ENCODE measurements at regions of chr6 and their contacts with region 1.

Region 1: DNA sequence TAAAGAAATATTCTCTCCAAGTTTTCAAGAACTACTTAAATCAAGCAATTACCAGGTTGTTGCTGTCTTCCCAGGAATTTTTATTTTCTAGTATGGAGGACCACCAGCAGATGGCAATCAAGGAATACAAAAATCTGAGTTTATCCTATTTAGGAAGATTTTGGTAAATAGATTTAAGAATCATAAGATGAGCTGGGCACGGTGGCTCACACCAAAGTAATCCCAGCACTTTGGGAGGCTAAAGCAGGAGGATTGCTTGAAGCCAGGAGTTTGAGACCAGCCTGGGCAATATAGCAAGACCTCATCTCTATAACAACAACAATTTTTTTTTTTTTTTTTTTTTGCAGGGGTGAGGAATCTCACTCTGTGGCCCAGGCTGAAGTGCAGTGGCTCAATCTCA is 19.3 kb upstream of the SEC63 start:
- DNase-seq: no peak
- ATAC-seq: no peak
- H3K4me3 ChIP-seq: no peak overlapping the region
- H3K27ac ChIP-seq: no peak overlapping the region
- H3K4me1 ChIP-seq: peaks cover 30% of the 10 kb centered on the region
- H3K27me3 ChIP-seq: no peaks in the 10 kb centered on the region
- CTCF ChIP-seq: peak; percentile 57
- EP300 ChIP-seq: no peak
- POLR2A ChIP-seq: no peak
- RAD21 ChIP-seq: 0 out of 2 replicates have a peak, but pooled peaks have one; percentile 24

Region 2: DNA sequence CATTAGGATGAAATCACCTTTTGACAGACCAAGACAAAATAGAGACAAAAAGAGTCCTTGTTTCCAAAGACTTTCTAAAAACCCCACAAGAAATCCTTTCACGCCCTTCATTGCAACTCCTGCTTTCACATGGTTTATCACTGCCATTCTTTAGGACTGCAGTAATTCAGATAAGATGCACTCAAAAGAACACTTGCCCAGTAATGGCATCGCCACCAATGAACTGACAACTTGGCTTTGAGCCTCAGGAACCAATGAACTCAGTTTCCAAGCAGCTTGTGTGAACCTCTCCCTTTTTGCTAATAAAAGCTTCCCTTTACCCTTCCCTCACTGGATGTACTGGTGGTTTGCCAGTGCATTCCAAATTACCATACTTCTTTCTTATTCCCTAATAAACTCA is 75.4 kb after region 1 on chr6:
- CTCF ChIA-PET with region 1: interaction called, 85 read pairs
- POLR2A ChIA-PET with region 1: no interaction called
- in situ Hi-C with region 1: loop called (anchors 5 kb)
- intact Hi-C with region 1: loop called (anchors 1 kb)
- DNase-seq: no peak
- ATAC-seq: no peak
- H3K4me3 ChIP-seq: no peak overlapping the region
- H3K27ac ChIP-seq: no peak overlapping the region
- H3K4me1 ChIP-seq: no peaks in the 10 kb centered on the region
- H3K27me3 ChIP-seq: no peaks in the 10 kb centered on the region
- CTCF ChIP-seq: no peak
- EP300 ChIP-seq: no peak
- POLR2A ChIP-seq: no peak
- RAD21 ChIP-seq: no peak

Region 3: DNA sequence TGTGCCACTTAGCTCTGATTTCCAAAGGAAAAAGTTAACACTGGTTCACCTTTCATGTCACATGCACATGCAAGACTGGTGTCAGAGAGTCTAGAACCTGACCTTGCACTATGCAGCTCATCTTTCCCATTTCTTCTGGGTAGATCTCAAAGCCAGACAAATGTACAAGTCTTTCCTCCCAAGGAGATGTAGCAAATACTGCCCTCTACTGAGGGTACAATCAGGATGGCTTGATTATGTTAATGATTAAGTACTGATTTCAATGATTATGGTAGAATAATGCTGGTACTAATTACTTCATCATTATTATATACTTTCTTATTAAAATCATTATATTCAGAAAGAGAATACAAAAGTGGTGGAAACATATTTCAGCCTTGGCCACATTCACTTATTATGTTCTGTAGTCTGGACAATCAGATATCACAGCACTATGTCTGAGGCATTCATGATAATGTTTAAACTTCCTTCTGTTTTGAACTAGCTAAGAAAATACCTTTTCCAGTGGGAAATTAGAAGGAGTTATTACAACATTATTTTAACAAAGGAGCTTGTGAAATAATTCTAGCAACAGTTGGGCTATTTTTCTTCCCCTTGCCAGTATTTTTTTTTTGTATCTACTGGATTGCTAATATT is 515.0 kb after region 1 on chr6:
- CTCF ChIA-PET with region 1: no interaction called
- POLR2A ChIA-PET with region 1: no interaction called
- in situ Hi-C with region 1: no loop called
- intact Hi-C with region 1: loop called (anchors 10 kb)
- DNase-seq: peak; percentile 25
- ATAC-seq: peak; percentile 36; the same call in 2 of the 3 replicates
- H3K4me3 ChIP-seq: no peak overlapping the region
- H3K27ac ChIP-seq: no peak overlapping the region
- H3K4me1 ChIP-seq: no peaks in the 10 kb centered on the region
- H3K27me3 ChIP-seq: no peaks in the 10 kb centered on the region; a peak in 1 of 5 replicates
- CTCF ChIP-seq: peak; percentile 66
- EP300 ChIP-seq: no peak
- POLR2A ChIP-seq: no peak
- RAD21 ChIP-seq: no peak

Region 4: DNA sequence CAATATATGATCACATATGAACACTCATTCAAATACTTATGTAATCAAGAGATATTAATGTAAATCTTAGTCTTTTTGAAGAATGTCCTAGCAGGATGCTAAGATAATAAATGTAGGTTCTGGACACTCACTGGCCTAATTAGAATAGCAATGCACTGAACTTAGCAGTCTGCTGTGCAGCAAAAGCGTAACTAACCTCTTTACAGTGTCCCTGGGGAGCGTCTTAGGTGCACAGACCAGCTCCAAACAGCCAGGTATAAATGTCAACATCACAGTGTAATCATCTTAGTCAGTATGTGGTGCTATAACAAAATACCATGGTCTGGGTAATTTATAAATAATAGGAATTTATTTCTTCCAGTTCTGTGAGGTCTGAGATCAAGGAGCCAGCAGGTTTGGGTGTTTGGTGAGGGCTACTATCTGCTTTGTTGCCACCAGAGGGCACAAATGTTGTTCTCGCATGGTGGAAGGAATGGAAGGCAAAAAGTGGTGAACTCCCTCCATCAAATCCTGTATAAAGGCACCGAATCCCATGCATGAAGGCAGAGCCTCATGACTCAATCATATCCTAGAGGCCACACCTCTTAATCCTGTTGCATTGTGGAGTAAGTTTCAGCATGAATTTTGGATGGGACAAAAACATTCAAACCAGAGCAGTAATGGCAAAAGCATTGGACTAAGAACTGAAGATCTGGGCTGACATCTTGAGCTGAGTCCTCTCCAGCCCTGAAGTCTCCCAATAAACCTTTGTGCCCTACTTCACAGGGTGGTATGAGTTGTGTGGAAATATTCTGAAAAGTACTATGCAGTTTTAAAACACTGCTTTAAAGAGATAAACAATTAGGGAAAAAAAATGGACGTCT is 541.7 kb after region 1 on chr6:
- CTCF ChIA-PET with region 1: no interaction called
- POLR2A ChIA-PET with region 1: no interaction called
- in situ Hi-C with region 1: loop called (anchors 25 kb)
- intact Hi-C with region 1: loop called (anchors 10 kb)
- DNase-seq: peak; percentile 24
- ATAC-seq: peak; percentile 75
- H3K4me3 ChIP-seq: no peak overlapping the region
- H3K27ac ChIP-seq: no peak overlapping the region
- H3K4me1 ChIP-seq: no peaks in the 10 kb centered on the region
- H3K27me3 ChIP-seq: no peaks in the 10 kb centered on the region
- CTCF ChIP-seq: peak; percentile 58
- EP300 ChIP-seq: no peak
- POLR2A ChIP-seq: no peak
- RAD21 ChIP-seq: no peak

Region 5: GRCh38 chr6:108526739-108527174 is 549.5 kb after region 1 on chr6:
- CTCF ChIA-PET with region 1: no interaction called
- POLR2A ChIA-PET with region 1: no interaction called
- in situ Hi-C with region 1: loop called (anchors 25 kb)
- intact Hi-C with region 1: loop called (anchors 10 kb)
- DNase-seq: peak; percentile 55
- ATAC-seq: peak; percentile 79
- H3K4me3 ChIP-seq: no peak overlapping the region
- H3K27ac ChIP-seq: no peak overlapping the region
- H3K4me1 ChIP-seq: peaks cover 6% of the 10 kb centered on the region; the same call in 1 of the 2 replicates
- H3K27me3 ChIP-seq: no peaks in the 10 kb centered on the region
- CTCF ChIP-seq: peak; percentile 82
- EP300 ChIP-seq: no peak
- POLR2A ChIP-seq: no peak
- RAD21 ChIP-seq: 0 out of 2 replicates have a peak, but pooled peaks have one; percentile 25

Measured in HepG2 (cell line).